CD4-positive, alpha-beta memory T cell (primary cell): ENCODE measurements at regions of chr14 and their contacts with region 1.

Region 1: GRCh38 chr14:22099942-22100763 is 426.5 kb upstream of the OR4E1 start:
- DNase-seq: peak; percentile 48 to 64 (median 58)
- H3K4me3 ChIP-seq: no peak overlapping the region
- H3K4me3 Mint-ChIP-seq: peak overlapping the region in 1 of 8 donors; percentile 25
- H3K27ac ChIP-seq: no peak overlapping the region
- H3K27ac Mint-ChIP-seq: peak overlapping the region in 1 of 7 donors; percentile 33
- H3K4me1 ChIP-seq: peaks cover 42% of the 10 kb centered on the region
- H3K4me1 Mint-ChIP-seq: peaks cover 18 to 51% (median 29%) of the 10 kb centered on the region in 4 donors
- H3K27me3 ChIP-seq: no peaks in the 10 kb centered on the region
- H3K27me3 Mint-ChIP-seq: no peaks in the 10 kb centered on the region

Region 2: GRCh38 chr14:22039938-22040775 is 60.0 kb before region 1 on chr14:
- CTCF ChIA-PET with region 1: interaction called, 22 read pairs
- POLR2A ChIA-PET with region 1: no interaction called
- intact Hi-C with region 1: no loop called
- DNase-seq: peak; percentile 38 to 56 (median 44)
- H3K4me3 ChIP-seq: peak overlapping the region in 1 of 2 donors; percentile 14
- H3K4me3 Mint-ChIP-seq: peak overlapping the region; percentile 40 to 82 (median 78)
- H3K27ac ChIP-seq: no peak overlapping the region
- H3K27ac Mint-ChIP-seq: peak overlapping the region; percentile 30 to 92 (median 80)
- H3K4me1 ChIP-seq: no peaks in the 10 kb centered on the region
- H3K4me1 Mint-ChIP-seq: peaks cover 2 to 11% (median 4%) of the 10 kb centered on the region in 4 donors
- H3K27me3 ChIP-seq: no peaks in the 10 kb centered on the region
- H3K27me3 Mint-ChIP-seq: no peaks in the 10 kb centered on the region

Region 3: GRCh38 chr14:22047115-22047514 is 53.0 kb before region 1 on chr14:
- CTCF ChIA-PET with region 1: interaction called, 13 read pairs
- POLR2A ChIA-PET with region 1: no interaction called
- intact Hi-C with region 1: loop called (anchors 1 kb)
- DNase-seq: peak; percentile 35 to 62 (median 55)
- H3K4me3 ChIP-seq: no peak overlapping the region
- H3K4me3 Mint-ChIP-seq: peak overlapping the region; percentile 46 to 89 (median 62)
- H3K27ac ChIP-seq: peak overlapping the region; percentile 21
- H3K27ac Mint-ChIP-seq: peak overlapping the region; percentile 70 to 88 (median 87)
- H3K4me1 ChIP-seq: peaks cover 13% of the 10 kb centered on the region
- H3K4me1 Mint-ChIP-seq: peaks cover 12 to 38% (median 21%) of the 10 kb centered on the region in 4 donors
- H3K27me3 ChIP-seq: no peaks in the 10 kb centered on the region
- H3K27me3 Mint-ChIP-seq: peaks cover 0 to 1% of the 10 kb centered on the region in 2 donors

Region 4: DNA sequence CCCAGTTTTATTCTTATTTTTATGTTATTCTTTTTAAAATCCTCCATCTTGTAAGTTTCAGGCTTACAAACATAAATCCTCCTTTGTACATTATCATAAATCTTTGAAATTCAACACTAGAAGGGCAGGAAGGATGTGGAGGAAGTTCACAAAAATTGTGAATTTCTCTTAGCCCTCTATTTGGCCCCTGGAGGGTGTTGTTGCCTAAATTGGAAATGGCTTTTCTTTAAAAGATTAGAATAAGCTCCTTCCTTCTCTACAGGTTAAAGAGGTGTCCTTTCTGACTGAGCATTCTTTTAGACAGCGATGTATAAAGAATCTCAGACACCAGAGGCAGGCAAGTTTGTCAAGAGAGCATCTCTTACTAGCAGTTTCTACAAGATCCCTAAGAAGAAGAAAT is 34.8 kb before region 1 on chr14:
- CTCF ChIA-PET with region 1: interaction called, 22 read pairs
- POLR2A ChIA-PET with region 1: interaction called, 10 read pairs
- intact Hi-C with region 1: loop called (anchors 5 kb)
- DNase-seq: no peak
- H3K4me3 ChIP-seq: no peak overlapping the region
- H3K4me3 Mint-ChIP-seq: peak overlapping the region in 5 of 8 donors; percentile 33 to 47 (median 41)
- H3K27ac ChIP-seq: no peak overlapping the region
- H3K27ac Mint-ChIP-seq: peak overlapping the region in 4 of 7 donors; percentile 9 to 82 (median 63)
- H3K4me1 ChIP-seq: peaks cover 13% of the 10 kb centered on the region
- H3K4me1 Mint-ChIP-seq: peaks cover 12 to 23% (median 16%) of the 10 kb centered on the region in 4 donors
- H3K27me3 ChIP-seq: no peaks in the 10 kb centered on the region
- H3K27me3 Mint-ChIP-seq: no peaks in the 10 kb centered on the region

Region 5: DNA sequence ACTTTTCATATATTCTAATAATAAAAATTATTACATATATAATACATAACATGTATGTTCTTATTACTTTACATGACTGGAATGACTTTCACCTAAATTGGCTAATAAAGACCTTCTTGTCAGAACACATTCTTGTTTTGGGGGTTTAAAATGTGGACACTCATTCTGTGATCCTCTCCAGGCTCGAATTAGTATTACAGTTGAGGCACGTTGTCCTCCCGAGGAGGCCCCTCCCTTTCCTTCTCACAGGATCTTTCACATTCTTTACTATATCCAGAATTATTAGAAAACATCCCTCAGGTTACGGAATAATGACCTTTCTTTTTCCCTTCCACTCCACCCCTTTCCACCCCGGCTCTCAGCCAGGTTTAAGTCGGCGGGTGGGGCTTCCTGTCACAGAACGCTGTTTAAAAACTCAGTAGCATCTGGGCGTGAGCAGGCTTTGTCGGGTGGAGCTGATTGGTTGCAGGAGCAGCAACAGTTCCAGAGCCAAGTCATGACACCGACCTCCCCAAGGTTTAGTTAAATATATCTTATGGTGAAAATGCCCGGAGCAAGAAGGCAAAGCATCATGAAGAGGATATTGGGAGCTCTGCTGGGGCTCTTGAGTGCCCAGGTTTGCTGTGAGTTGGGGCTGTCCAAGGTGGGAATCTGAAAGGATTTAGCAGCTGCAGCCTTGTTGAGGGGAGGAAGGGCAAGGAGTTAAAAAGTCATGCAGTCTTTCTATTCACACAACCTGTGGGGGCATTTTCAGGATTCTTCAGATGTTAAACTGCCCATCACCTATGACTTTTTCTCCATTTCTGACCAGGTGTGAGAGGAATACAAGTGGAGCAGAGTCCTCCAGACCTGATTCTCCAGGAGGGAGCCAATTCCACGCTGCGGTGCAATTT is 29.8 kb before region 1 on chr14:
- CTCF ChIA-PET with region 1: interaction called, 22 read pairs
- POLR2A ChIA-PET with region 1: interaction called, 10 read pairs
- intact Hi-C with region 1: loop called (anchors 5 kb)
- DNase-seq: peak; percentile 50 to 74 (median 57)
- H3K4me3 ChIP-seq: peak overlapping the region; percentile 55 to 69
- H3K4me3 Mint-ChIP-seq: peak overlapping the region; percentile 89 to 96 (median 92)
- H3K27ac ChIP-seq: peak overlapping the region; percentile 38
- H3K27ac Mint-ChIP-seq: peak overlapping the region; percentile 90 to 96 (median 93)
- H3K4me1 ChIP-seq: peaks cover 39% of the 10 kb centered on the region
- H3K4me1 Mint-ChIP-seq: peaks cover 17 to 45% (median 24%) of the 10 kb centered on the region in 4 donors
- H3K27me3 ChIP-seq: no peaks in the 10 kb centered on the region
- H3K27me3 Mint-ChIP-seq: no peaks in the 10 kb centered on the region

Region 6: GRCh38 chr14:22084393-22085281 is 15.5 kb before region 1 on chr14:
- CTCF ChIA-PET with region 1: interaction called, 28 read pairs
- POLR2A ChIA-PET with region 1: interaction called, 8 read pairs
- intact Hi-C with region 1: loop called (anchors 1 kb)
- DNase-seq: peak in 4 of 5 donors; percentile 44 to 52 (median 48)
- H3K4me3 ChIP-seq: no peak overlapping the region
- H3K4me3 Mint-ChIP-seq: peak overlapping the region in 6 of 8 donors; percentile 37 to 70 (median 61)
- H3K27ac ChIP-seq: no peak overlapping the region
- H3K27ac Mint-ChIP-seq: peak overlapping the region in 5 of 7 donors; percentile 15 to 73 (median 41)
- H3K4me1 ChIP-seq: no peaks in the 10 kb centered on the region
- H3K4me1 Mint-ChIP-seq: peaks cover 13 to 21% (median 16%) of the 10 kb centered on the region in 4 donors
- H3K27me3 ChIP-seq: no peaks in the 10 kb centered on the region
- H3K27me3 Mint-ChIP-seq: peaks cover 0 to 1% of the 10 kb centered on the region in 2 donors